ENCODE measurements at regions of chr3 and their contacts with region 1.

Region 1: GRCh38 chr3:185912929-185913901 is 24.6 kb downstream of the TRA2B start:
- DNase-seq: no peak
- ATAC-seq: peak; percentile 7

Region 2: GRCh38 chr3:185824476-185825378 is 88.5 kb before region 1 on chr3 and contains the start of gene IGF2BP2:
- intact Hi-C with region 1: loop called (anchors 10 kb)
- DNase-seq: peak; percentile 83
- ATAC-seq: peak; percentile 84
- total RNA-seq, gene IGF2BP2: 18.7 TPM